ENCODE measurements at regions of chr1 and their contacts with region 1.

Region 1: GRCh38 chr1:161132410-161133219 is at the start of gene DEDD:
- DNase-seq: peak; percentile 94
- H3K4me3 ChIP-seq: peak within 1 kb of the TSS; percentile 92
- H3K27ac ChIP-seq: peak within 1 kb of the TSS; percentile 94
- H3K27me3 ChIP-seq: no peaks in the 10 kb centered on the region
- CTCF ChIP-seq: no peak

Region 2: GRCh38 chr1:160711602-160712311 is 420.9 kb before region 1 on chr1 and contains the start of gene CD48:
- in situ Hi-C with region 1: no loop called
- DNase-seq: no peak
- H3K4me3 ChIP-seq: no peak within 1 kb of the TSS
- H3K27ac ChIP-seq: no peak within 1 kb of the TSS
- H3K27me3 ChIP-seq: no peaks in the 10 kb centered on the region
- CTCF ChIP-seq: no peak

Region 3: DNA sequence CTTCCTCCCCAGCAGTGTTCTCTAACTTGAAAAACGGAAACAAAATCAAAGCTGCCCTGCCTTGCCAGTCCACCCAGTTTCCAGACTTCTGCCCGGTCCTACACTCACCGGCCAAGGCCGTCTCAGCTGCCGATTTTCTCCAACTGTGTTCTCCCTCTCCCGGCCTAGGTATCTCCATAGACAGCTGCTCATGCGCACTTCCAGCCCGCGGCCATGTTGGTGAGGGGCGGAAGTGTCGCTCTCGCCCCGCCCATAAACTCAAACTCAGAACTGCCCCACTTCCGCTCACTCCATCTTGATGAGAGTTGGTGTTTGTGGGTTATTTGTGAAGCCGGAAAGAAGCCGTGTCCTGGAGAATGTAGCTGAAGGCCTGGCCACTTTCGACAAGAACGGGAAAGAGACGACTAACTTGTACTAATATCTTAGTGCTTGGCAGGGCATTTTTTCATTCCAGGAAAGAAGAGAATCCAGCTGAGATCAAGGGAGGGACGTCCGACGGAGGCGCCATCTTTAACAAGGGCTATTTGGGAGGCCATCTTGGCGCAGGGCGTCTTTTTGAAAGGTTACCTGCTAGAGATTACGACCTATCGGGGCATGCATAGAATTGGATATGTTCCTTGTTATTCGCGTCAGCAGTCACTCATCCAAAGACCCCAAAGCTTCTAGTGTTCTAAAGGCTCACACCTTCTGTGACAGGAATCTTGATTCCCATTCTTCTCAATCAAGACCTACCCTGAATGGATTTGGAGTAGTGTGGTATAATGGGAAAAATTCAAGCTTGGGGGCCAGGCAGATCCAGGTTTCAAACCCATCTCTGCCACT is 86.7 kb before region 1 on chr1 and contains the start of gene USF1:
- in situ Hi-C with region 1: loop called (anchors 25 kb)
- DNase-seq: peak; percentile 95
- H3K4me3 ChIP-seq: peak within 1 kb of the TSS; percentile 90
- H3K27ac ChIP-seq: peak within 1 kb of the TSS; percentile 96
- H3K27me3 ChIP-seq: no peaks in the 10 kb centered on the region
- CTCF ChIP-seq: no peak

Region 4: DNA sequence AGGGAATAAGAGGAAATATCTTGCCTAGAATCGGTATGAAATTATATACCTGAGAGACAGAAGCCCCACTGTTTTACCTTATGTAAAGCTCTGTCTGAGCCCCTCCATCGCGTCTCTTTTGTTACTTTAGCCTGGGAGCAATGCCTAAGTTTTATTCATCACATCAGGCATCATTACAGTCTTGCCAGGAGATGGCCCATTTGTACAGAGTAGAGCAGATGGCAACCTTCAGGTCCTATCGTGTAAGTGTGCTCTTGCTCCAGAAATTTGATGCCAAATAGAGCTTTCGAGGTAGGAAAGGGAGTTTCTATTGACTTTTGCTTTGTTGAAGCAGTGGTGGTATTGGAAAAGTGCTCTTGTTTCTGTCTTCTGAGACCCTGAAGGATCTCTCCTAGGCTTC is 210.2 kb after region 1 on chr1:
- in situ Hi-C with region 1: no loop called
- DNase-seq: no peak
- H3K4me3 ChIP-seq: no peak overlapping the region
- H3K27ac ChIP-seq: no peak overlapping the region
- H3K27me3 ChIP-seq: no peaks in the 10 kb centered on the region
- CTCF ChIP-seq: no peak